ENCODE measurements at regions of chr16 and their contacts with region 1.

Region 1: GRCh38 chr16:391885-392335 is 5.1 kb upstream of the NME4 start:
- DNase-seq: peak; percentile 65
- H3K4me3 ChIP-seq: no peak overlapping the region
- H3K27ac ChIP-seq: no peak overlapping the region
- H3K4me1 ChIP-seq: peaks cover 8% of the 10 kb centered on the region
- CTCF ChIP-seq: peak; percentile 86

Region 2: DNA sequence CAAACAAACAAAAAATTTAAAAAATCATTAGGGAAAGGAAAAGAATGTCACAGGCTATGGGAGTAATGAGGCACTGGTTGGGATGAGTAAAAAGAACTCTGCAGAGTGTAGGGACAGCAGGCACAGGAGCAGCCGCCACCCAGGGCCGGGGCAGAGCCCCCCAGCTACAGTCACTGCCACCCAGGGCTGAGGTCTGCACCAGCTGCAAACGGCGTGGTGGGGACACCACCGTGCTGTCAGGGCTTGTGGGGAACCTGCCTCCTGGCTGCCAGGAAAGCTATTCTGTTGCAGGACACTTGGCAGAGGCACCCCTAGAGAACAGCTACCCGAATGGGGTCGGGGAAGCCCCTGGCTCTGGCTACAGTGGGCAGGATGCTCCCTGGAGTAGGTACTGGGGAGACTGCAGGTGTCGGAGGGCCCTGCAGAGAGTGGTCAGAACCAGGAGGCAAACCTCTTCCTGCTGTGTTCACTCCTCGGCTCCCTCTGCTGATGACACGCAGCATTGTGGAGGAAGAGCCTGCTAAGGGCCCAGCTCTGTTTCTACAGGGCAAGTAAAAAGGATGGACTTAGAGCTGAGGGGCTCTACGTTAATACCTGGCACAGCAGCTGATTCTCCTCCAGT is 103.3 kb after region 1 on chr16:
- CTCF ChIA-PET with region 1: interaction called, 3 read pairs
- POLR2A ChIA-PET with region 1: no interaction called
- intact Hi-C with region 1: loop called (anchors 5 kb)
- DNase-seq: peak; percentile 24
- H3K4me3 ChIP-seq: no peak overlapping the region
- H3K27ac ChIP-seq: no peak overlapping the region
- H3K4me1 ChIP-seq: no peaks in the 10 kb centered on the region
- CTCF ChIP-seq: peak; percentile 52; the same call in 1 of the 2 replicates

Measured in OCI-LY7 (cell line).